CD4-positive, alpha-beta memory T cell (primary cell): ENCODE measurements at regions of chr3 and their contacts with region 1.

Region 1: DNA sequence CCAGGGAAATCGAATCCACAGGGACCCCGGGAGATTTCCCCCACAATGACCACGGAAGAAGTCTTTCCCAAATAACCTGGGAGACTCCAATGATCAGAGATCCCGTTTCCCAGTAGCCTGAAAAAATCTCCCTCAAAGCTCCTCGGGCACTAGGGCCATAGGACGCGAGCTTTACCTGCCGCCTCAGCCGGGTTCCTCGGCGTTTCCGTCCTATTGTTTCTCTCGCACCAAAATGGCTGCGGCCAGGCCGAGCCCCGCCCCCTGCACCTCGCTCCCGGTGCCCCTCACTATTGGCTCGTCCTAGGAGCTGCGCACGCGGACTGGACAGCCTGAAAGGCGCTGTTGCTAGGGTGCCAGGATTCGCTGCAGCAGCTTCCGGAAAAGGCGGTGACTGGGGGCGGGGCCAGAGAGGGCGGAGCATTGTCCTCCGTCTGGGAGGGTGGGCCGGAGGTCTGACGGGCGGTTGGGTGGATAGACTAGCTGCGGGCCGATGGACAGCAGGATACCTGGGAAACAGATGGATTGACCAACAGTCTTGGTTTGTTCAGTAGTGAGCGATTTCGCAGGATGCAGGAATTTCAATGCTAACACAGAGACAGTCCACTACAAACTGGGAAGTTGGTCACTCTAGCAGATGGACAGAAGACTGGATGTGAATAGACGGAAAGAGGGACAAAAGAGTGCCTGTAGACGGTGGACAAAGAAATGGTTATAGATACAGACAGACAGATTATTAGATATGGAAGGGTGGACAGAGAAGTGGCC is at the start of gene IP6K2:
- DNase-seq: peak; percentile 95 to 99 (median 97)
- H3K4me3 ChIP-seq: peak within 1 kb of the TSS; percentile 90 to 98
- H3K4me3 Mint-ChIP-seq: peak within 1 kb of the TSS; percentile 98 to 100 (median 99)
- H3K27ac ChIP-seq: peak within 1 kb of the TSS; percentile 91
- H3K27ac Mint-ChIP-seq: peak within 1 kb of the TSS; percentile 88 to 99 (median 99)
- H3K4me1 ChIP-seq: peaks cover 44% of the 10 kb centered on the region
- H3K4me1 Mint-ChIP-seq: peaks cover 28 to 51% (median 37%) of the 10 kb centered on the region in 4 donors
- H3K27me3 ChIP-seq: no peaks in the 10 kb centered on the region
- H3K27me3 Mint-ChIP-seq: no peaks in the 10 kb centered on the region
- total RNA-seq, gene IP6K2: 84.5 to 91.8 TPM

Region 2: GRCh38 chr3:48514436-48515227 is 202.5 kb before region 1 on chr3:
- CTCF ChIA-PET with region 1: no interaction called
- POLR2A ChIA-PET with region 1: no interaction called
- intact Hi-C with region 1: no loop called
- DNase-seq: peak; percentile 56 to 65 (median 62)
- H3K4me3 ChIP-seq: no peak overlapping the region
- H3K4me3 Mint-ChIP-seq: peak overlapping the region; percentile 52 to 81 (median 72)
- H3K27ac ChIP-seq: peak overlapping the region; percentile 31
- H3K27ac Mint-ChIP-seq: peak overlapping the region in 6 of 7 donors; percentile 43 to 86 (median 67)
- H3K4me1 ChIP-seq: peaks cover 75% of the 10 kb centered on the region
- H3K4me1 Mint-ChIP-seq: peaks cover 49 to 82% (median 68%) of the 10 kb centered on the region in 4 donors
- H3K27me3 ChIP-seq: no peaks in the 10 kb centered on the region
- H3K27me3 Mint-ChIP-seq: no peaks in the 10 kb centered on the region

Region 3: GRCh38 chr3:48663415-48664312 is 53.5 kb before region 1 on chr3:
- CTCF ChIA-PET with region 1: no interaction called
- POLR2A ChIA-PET with region 1: interaction called, 12 read pairs
- intact Hi-C with region 1: no loop called
- DNase-seq: peak; percentile 78 to 92 (median 80)
- H3K4me3 ChIP-seq: peak overlapping the region; percentile 75 to 76
- H3K4me3 Mint-ChIP-seq: peak overlapping the region; percentile 76 to 93 (median 84)
- H3K27ac ChIP-seq: peak overlapping the region; percentile 33
- H3K27ac Mint-ChIP-seq: peak overlapping the region; percentile 53 to 87 (median 68)
- H3K4me1 ChIP-seq: peaks cover 27% of the 10 kb centered on the region
- H3K4me1 Mint-ChIP-seq: peaks cover 9 to 31% (median 18%) of the 10 kb centered on the region in 4 donors
- H3K27me3 ChIP-seq: peaks cover 6% of the 10 kb centered on the region
- H3K27me3 Mint-ChIP-seq: peaks cover 1 to 10% of the 10 kb centered on the region in 2 donors

Region 4: DNA sequence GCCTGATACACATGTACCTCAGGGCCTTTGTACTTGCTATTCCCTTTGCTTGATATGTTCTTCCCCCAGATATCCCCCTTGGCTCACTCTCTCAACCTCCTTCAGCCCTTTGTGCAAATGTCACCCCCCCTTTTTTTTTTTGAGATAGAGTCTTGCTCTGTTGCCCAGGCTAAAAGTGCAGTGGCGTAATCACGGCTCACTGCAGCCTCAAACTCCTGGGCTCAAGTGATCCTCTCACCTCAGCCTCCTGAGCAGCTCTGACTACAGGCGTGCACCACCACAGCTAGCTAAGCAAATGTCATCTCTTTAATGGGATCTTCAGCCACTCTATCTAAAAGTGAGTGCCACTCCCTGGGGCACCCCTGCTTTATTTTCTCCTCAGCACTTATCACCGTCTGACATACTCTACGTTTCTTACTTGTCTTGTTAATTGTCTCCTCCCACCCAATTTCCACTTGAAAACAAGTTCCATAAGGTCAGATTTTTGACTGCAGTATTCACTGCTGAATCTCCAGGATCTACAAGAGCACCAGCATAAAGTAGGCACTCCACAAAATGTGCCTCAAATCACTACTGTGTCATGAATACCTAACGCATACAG is 14.7 kb before region 1 on chr3:
- CTCF ChIA-PET with region 1: interaction called, 4 read pairs
- POLR2A ChIA-PET with region 1: interaction called, 13 read pairs
- intact Hi-C with region 1: loop called (anchors 2 kb)
- DNase-seq: no peak
- H3K4me3 ChIP-seq: no peak overlapping the region
- H3K4me3 Mint-ChIP-seq: no peak overlapping the region
- H3K27ac ChIP-seq: no peak overlapping the region
- H3K27ac Mint-ChIP-seq: peak overlapping the region in 4 of 7 donors; percentile 0 to 55 (median 8)
- H3K4me1 ChIP-seq: peaks cover 40% of the 10 kb centered on the region
- H3K4me1 Mint-ChIP-seq: peaks cover 27 to 52% (median 37%) of the 10 kb centered on the region in 4 donors
- H3K27me3 ChIP-seq: no peaks in the 10 kb centered on the region
- H3K27me3 Mint-ChIP-seq: no peaks in the 10 kb centered on the region